A549 (cell line): ENCODE measurements at regions of chr10 and their contacts with region 1.

Region 1: DNA sequence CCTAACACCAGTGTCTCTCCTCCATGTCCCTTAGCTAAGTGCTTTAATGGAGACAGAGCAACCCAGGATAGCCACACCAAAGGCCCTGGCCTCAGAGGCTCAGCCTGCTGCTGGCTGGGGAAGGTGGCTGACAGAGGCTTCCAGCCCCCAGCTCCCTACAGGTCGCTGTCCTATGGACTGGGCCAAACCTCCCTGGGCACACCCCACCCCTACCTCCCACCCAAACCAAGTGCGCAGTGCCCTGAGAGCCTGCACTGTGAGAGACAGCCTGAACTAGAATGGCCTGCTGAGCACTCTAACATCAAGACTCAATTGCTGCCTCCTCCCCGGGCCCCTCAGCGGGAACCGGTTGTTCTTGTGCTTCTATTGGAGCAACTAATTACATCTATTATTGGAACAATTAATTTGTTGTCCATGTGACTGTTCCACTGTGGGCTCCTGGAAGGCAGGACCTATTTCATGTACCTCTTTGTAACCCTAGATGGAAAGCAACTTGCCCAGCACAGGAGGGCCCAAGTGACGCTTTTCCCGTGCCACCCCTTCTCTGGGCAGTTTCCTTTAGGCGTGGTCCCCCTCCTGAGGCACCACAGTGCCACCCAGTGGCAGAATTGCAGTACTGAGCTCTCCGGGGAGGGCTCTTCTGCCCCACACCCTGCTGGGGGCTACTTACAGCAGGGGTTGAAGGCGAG is 63.6 kb upstream of the WAPL start:
- DNase-seq: peak; percentile 73 to 81
- ATAC-seq: peak; percentile 94 to 98
- H3K4me3 ChIP-seq: no peak overlapping the region
- H3K27ac ChIP-seq: peak overlapping the region; percentile 11 to 63; a peak in 4 of 6 replicates
- H3K4me1 ChIP-seq: 0 out of 3 replicates have a peak, but pooled peaks cover 3% of the 10 kb centered on the region
- CTCF ChIP-seq: peak; percentile 96
- EP300 ChIP-seq: no peak
- POLR2A ChIP-seq: no peak
- RAD21 ChIP-seq: peak; percentile 95

Region 2: GRCh38 chr10:86389441-86390193 is 195.6 kb before region 1 on chr10:
- CTCF ChIA-PET with region 1: interaction called, 17 read pairs
- POLR2A ChIA-PET with region 1: no interaction called
- DNase-seq: peak; percentile 42 to 43
- ATAC-seq: peak; percentile 60 to 89; a peak in 5 of 6 replicates
- H3K4me3 ChIP-seq: peak overlapping the region; percentile 39
- H3K27ac ChIP-seq: peak overlapping the region; percentile 31 to 74; a peak in 4 of 6 replicates
- H3K4me1 ChIP-seq: no peaks in the 10 kb centered on the region
- CTCF ChIP-seq: no peak
- EP300 ChIP-seq: no peak
- POLR2A ChIP-seq: no peak
- RAD21 ChIP-seq: no peak

Region 3: DNA sequence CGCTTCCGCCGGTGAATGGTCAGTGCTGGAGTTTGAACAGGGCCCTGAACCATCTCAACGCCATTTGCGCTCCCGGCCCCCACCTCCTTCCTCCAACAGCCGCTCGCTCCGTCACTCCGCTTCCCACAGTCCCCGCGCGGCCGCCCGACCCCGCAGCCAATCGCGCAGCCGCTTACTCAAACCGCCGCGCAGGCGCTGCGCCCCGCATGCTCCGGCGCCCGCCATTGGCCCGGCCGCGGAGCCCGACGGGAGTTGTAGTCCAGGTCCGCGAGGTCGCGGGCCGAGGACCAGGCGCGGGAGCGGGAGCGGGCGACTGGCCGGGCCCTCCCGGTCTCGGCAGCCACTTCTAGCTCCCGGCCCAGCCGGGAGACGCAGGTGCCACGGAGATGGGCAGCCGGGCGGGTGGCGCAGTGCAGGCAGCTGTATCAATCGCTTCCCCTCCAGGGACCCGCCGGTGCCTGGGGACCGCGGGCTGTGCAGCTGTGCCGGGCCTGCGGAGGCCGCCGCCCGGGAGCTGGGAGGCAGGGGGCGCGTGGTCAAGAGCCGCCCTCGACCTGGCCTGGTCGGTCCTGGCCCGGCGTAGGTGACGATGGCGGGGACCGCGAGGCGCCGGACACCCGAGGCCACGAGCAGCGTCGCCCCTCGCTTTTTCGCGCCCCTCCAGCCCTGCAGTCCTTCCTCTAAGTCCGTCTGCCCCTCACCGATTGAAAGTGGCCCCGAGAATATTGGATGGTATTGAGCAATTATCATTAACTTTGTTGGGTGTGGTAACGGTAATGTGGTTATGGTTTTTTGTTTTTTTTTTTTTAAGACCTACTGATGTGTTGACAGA is 63.3 kb before region 1 on chr10 and contains the start of gene WAPL:
- CTCF ChIA-PET with region 1: interaction called, 17 read pairs
- POLR2A ChIA-PET with region 1: no interaction called
- DNase-seq: peak; percentile 95
- ATAC-seq: peak; percentile 93 to 97
- H3K4me3 ChIP-seq: peak within 1 kb of the TSS; percentile 95
- H3K27ac ChIP-seq: peak within 1 kb of the TSS; percentile 94 to 98
- H3K4me1 ChIP-seq: peaks cover 40% of the 10 kb centered on the region
- CTCF ChIP-seq: no peak
- EP300 ChIP-seq: no peak
- POLR2A ChIP-seq: peak; percentile 55
- RAD21 ChIP-seq: no peak; a peak in 1 of 5 replicates
- polyA plus RNA-seq, gene WAPL: 20.1 and 25.6 TPM in 2 replicates

Region 4: GRCh38 chr10:86569335-86569734 is 15.8 kb before region 1 on chr10:
- CTCF ChIA-PET with region 1: interaction called, 11 read pairs
- POLR2A ChIA-PET with region 1: no interaction called
- DNase-seq: no peak
- ATAC-seq: no peak
- H3K4me3 ChIP-seq: no peak overlapping the region
- H3K27ac ChIP-seq: no peak overlapping the region
- H3K4me1 ChIP-seq: no peaks in the 10 kb centered on the region
- CTCF ChIP-seq: no peak
- EP300 ChIP-seq: no peak
- POLR2A ChIP-seq: no peak
- RAD21 ChIP-seq: no peak

Region 5: DNA sequence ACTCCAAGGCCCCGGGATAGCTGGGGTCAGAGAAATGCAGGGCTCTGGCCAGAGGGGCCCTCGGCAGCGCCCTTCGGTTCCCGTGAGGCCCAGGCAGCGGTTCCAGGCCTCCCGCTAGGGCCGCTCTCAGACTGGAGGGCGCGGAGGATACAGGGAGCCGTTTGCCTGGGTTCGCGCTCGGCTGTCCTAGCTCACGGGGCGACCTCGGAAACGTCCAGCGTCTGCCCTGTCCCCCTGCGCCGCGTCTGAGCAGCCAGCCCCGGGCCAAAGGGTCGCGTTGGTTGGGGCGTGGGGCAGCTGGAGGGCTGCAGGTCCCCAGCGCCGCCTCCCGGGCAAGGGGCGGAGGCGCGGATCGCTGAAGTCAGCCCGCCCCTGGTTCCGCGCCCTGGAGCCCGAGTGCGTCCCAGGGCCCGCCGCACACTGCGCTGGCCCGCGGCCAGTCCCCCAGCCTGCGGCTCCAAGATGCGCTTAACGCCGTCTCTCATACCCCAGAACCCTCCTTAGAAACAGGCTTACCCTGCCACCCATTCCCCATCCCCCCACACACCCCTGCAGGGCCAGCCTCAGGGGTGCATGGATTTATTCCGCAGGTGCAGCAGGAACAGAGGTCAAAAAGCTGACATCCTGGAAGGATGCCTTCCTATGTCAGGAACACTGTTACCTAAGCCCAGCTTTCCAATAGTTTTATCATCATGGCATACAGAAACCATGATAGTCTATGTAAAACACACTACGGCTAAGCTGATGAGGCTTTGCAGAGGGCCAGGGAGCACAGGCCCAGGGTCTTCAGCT is 47.0 kb after region 1 on chr10:
- CTCF ChIA-PET with region 1: interaction called, 10 read pairs
- POLR2A ChIA-PET with region 1: no interaction called
- DNase-seq: no peak
- ATAC-seq: peak; percentile 54 to 65; a peak in 3 of 6 replicates
- H3K4me3 ChIP-seq: no peak overlapping the region
- H3K27ac ChIP-seq: no peak overlapping the region
- H3K4me1 ChIP-seq: 0 out of 3 replicates have a peak, but pooled peaks cover 4% of the 10 kb centered on the region
- CTCF ChIP-seq: no peak
- EP300 ChIP-seq: no peak
- POLR2A ChIP-seq: no peak
- RAD21 ChIP-seq: no peak

Region 6: GRCh38 chr10:86836044-86836443 is 250.9 kb after region 1 on chr10:
- CTCF ChIA-PET with region 1: no interaction called
- POLR2A ChIA-PET with region 1: no interaction called
- DNase-seq: no peak
- ATAC-seq: no peak
- H3K4me3 ChIP-seq: no peak overlapping the region
- H3K27ac ChIP-seq: no peak overlapping the region
- H3K4me1 ChIP-seq: no peaks in the 10 kb centered on the region
- CTCF ChIP-seq: no peak
- EP300 ChIP-seq: no peak
- POLR2A ChIP-seq: no peak
- RAD21 ChIP-seq: no peak